HEK293 (cell line): ENCODE measurements at regions of chr20 and their contacts with region 1.

Region 1: DNA sequence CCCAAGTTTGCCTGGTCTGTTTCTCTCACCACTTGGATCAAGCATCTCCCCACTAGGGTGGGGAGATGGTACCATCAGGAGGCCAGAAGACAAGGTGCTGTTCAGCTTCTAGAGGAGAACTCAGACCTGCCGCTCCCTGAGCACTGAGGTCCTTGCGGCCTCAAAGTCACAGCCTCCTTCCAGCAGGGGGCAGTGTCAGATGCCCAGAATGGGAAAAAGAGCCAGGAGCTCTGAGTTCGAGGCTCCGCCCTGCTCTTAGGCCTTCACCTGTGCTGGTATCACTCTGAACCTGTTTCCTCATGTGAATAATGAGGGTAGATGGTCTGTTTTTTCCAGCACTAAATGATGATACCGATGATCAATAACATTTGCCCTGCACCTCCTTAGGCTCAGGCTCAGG is 68.7 kb downstream of the TOX2 start:
- H3K4me3 ChIP-seq: no peak overlapping the region
- H3K27ac ChIP-seq: no peak overlapping the region
- H3K4me1 ChIP-seq: peaks cover 4% of the 10 kb centered on the region
- CTCF ChIP-seq: peak; percentile 26; the same call in 1 of the 2 replicates

Region 2: DNA sequence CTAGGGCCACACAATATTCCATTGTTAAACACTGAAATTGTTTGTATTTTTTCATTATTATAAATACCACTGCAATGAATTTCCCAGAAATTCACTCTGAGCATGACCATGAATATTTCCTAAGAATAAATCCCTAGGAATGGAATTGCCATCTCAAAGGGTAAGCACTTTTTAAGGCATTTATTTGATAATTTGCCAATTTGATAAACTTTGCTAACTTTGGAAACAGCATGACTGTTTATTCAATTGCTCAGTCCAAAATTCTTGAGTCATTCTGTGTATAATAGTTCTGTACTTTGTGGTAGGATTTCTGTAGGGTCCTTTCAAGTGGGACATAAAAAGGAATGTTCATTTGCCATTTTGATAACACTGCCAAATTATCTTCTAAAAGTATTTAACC is 112.9 kb before region 1 on chr20:
- CTCF ChIA-PET with region 1: no interaction called
- POLR2A ChIA-PET with region 1: no interaction called
- H3K4me3 ChIP-seq: no peak overlapping the region
- H3K27ac ChIP-seq: no peak overlapping the region
- H3K4me1 ChIP-seq: no peaks in the 10 kb centered on the region
- CTCF ChIP-seq: no peak

Region 3: DNA sequence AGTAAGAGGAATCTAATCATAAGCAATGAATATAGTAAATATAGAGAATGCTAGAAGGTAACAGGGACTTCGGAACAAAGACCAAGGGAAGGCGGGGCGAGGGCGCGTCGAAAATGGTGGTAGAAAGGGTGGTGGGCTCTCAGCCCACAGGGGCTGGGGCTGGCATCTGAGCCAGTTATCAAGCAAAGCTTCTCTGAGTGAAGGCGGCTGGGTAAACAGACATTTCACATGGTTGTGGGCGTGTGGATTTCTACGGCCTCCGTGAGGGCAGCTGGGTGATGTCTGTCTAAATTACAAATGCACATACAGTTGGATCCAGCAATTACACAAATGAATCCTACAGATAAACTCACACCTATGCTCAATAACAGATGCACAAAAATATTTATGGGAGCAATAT is 12.1 kb before region 1 on chr20:
- CTCF ChIA-PET with region 1: interaction called, 10 read pairs
- POLR2A ChIA-PET with region 1: no interaction called
- H3K4me3 ChIP-seq: no peak overlapping the region
- H3K27ac ChIP-seq: no peak overlapping the region
- H3K4me1 ChIP-seq: no peaks in the 10 kb centered on the region
- CTCF ChIP-seq: no peak